PC-9 (cell line): ENCODE measurements at regions of chr10 and their contacts with region 1.

Region 1: DNA sequence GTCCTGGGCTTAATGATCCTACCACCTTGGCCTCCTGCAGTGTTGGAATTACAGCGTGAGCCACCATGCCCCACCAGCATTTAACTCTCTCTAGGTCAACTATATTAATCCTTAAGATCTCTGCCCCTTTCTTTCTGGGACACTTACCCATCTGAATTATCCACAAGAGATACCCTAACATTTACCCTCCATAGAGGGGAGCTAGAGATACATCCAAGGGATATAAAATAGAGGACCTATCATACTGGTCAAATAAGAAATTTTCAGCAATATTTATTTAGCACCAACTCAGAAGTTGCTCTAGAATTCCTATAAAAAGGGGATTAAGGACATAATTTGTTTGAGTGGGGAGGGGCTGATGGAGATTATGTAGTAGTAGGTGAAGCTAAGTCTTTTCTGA is 96.5 kb downstream of the OTUD1 start:
- DNase-seq: no peak
- H3K4me3 ChIP-seq: no peak overlapping the region
- H3K27ac ChIP-seq: no peak overlapping the region
- H3K4me1 ChIP-seq: no peaks in the 10 kb centered on the region
- H3K27me3 ChIP-seq: no peaks in the 10 kb centered on the region
- CTCF ChIP-seq: no peak

Region 2: GRCh38 chr10:23270531-23270930 is 264.9 kb before region 1 on chr10:
- CTCF ChIA-PET with region 1: no interaction called
- POLR2A ChIA-PET with region 1: no interaction called
- intact Hi-C with region 1: no loop called
- DNase-seq: no peak
- H3K4me3 ChIP-seq: no peak overlapping the region
- H3K27ac ChIP-seq: no peak overlapping the region
- H3K4me1 ChIP-seq: no peaks in the 10 kb centered on the region
- H3K27me3 ChIP-seq: no peaks in the 10 kb centered on the region
- CTCF ChIP-seq: no peak

Region 3: DNA sequence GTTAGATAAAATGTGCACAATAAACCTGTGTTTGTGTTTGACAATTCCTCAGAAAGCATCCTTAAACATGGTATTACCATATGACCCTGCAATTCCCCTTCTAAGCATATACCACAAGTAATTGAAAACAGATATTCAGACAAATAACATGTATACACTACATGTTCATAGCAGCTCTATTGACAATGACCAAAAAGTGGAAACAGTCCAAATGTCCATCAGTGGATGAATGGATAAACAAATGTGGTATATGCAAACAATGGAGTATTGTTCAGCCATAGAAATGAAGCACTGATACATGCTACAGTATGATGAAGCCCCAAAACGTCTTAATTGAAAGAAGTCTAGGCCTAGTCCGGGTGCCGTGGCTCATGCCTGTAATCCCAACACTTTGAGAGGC is 183.6 kb after region 1 on chr10:
- CTCF ChIA-PET with region 1: interaction called, 3 read pairs
- POLR2A ChIA-PET with region 1: interaction called, 10 read pairs
- intact Hi-C with region 1: no loop called
- DNase-seq: no peak
- H3K4me3 ChIP-seq: no peak overlapping the region
- H3K27ac ChIP-seq: no peak overlapping the region
- H3K4me1 ChIP-seq: no peaks in the 10 kb centered on the region
- H3K27me3 ChIP-seq: no peaks in the 10 kb centered on the region
- CTCF ChIP-seq: no peak